Activated CD4-positive, alpha-beta memory T cell treated with anti-CD3 and anti-CD28 coated beads for 36 hours (primary cell): ENCODE measurements at regions of chr5 and their contacts with region 1.

Region 1: GRCh38 chr5:138352071-138352721 is at the start of gene KDM3B:
- DNase-seq: peak; percentile 95
- H3K4me3 Mint-ChIP-seq: peak within 1 kb of the TSS; percentile 91
- H3K27ac Mint-ChIP-seq: peak within 1 kb of the TSS; percentile 91
- H3K4me1 Mint-ChIP-seq: peaks cover 30% of the 10 kb centered on the region
- H3K27me3 Mint-ChIP-seq: no peaks in the 10 kb centered on the region
- total RNA-seq, gene KDM3B: 38.6 to 39.6 TPM

Region 2: GRCh38 chr5:138213161-138214029 is 138.8 kb before region 1 on chr5 and contains the start of gene CDC23:
- CTCF ChIA-PET with region 1: interaction called, 13 read pairs
- POLR2A ChIA-PET with region 1: interaction called, 6 read pairs
- intact Hi-C with region 1: loop called (anchors 1 kb)
- DNase-seq: peak; percentile 94
- H3K4me3 Mint-ChIP-seq: peak within 1 kb of the TSS; percentile 100
- H3K27ac Mint-ChIP-seq: peak within 1 kb of the TSS; percentile 89
- H3K4me1 Mint-ChIP-seq: peaks cover 20% of the 10 kb centered on the region
- H3K27me3 Mint-ChIP-seq: no peaks in the 10 kb centered on the region
- total RNA-seq, gene CDC23: 32.4 to 33.4 TPM

Region 3: GRCh38 chr5:138337685-138338410 is 14.3 kb before region 1 on chr5 and contains the start of gene FAM53C:
- CTCF ChIA-PET with region 1: interaction called, 192 read pairs
- POLR2A ChIA-PET with region 1: interaction called, 105 read pairs
- intact Hi-C with region 1: loop called (anchors 1 kb)
- DNase-seq: peak; percentile 94
- H3K4me3 Mint-ChIP-seq: peak within 1 kb of the TSS; percentile 93
- H3K27ac Mint-ChIP-seq: peak within 1 kb of the TSS; percentile 96
- H3K4me1 Mint-ChIP-seq: peaks cover 38% of the 10 kb centered on the region
- H3K27me3 Mint-ChIP-seq: no peaks in the 10 kb centered on the region
- total RNA-seq, gene FAM53C: 17.2 to 19.2 TPM

Region 4: DNA sequence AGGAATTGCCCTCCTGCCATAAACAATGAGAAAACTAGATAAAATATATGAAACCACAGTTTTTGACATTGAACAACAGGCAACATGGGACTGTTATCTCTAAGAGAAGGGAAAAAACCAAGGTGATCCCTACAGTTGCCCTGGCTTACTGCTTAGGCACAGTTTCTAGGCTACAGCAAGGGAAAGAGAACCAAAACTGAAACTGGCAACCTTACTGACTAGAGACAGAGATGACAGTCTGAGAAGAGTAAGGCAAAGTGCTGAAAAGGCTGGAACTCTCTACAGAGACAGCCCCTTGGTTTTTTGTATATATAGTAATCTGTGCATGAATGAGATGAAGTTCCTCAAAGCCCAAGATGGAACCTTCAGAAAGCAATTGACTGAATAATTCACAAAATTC is 50.4 kb after region 1 on chr5:
- CTCF ChIA-PET with region 1: interaction called, 15 read pairs
- POLR2A ChIA-PET with region 1: no interaction called
- intact Hi-C with region 1: loop called (anchors 5 kb)
- DNase-seq: no peak
- H3K4me3 Mint-ChIP-seq: no peak overlapping the region
- H3K27ac Mint-ChIP-seq: peak overlapping the region; percentile 53
- H3K4me1 Mint-ChIP-seq: peaks cover 16% of the 10 kb centered on the region
- H3K27me3 Mint-ChIP-seq: no peaks in the 10 kb centered on the region

Region 5: DNA sequence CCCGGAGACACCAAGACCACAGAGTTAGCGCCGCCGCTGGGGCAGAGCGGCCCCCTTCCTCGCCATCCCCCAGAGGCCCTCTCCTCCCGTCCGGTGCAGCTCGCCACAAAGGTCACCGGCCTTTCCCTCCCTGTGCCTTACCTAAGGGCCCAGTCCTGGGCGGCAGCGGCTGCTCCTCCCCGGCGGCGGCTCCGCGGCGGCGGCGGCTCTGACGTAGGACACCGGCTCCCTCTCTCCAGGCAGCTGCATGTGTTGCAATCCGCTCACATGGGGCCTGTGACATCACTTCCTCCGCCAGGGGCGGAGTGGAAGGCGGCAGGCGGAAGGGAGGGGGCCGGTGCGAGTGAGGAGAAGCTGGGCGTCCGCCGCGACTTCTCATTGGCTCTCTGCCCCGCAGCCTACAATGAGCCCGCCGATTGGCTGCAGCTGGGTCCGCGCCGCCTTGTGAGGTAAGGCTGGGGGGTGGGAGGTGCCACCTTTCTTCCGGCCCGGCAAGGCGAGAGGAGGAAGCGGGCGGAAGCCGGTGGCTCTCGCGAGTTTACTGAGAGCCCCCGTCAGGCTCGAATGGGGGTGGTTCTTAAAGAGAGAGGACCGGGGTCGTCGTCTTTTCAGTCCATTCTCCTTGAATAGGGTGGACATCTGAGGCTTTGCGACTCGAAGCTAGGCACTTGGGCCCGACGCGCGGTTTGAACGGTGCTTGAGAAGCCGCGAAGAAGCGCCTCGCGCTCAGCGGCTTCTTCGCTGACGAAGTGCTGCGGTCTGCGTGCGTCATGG is 190.9 kb after region 1 on chr5 and contains the start of gene ETF1:
- CTCF ChIA-PET with region 1: interaction called, 8 read pairs
- POLR2A ChIA-PET with region 1: interaction called, 18 read pairs
- intact Hi-C with region 1: loop called (anchors 1 kb)
- DNase-seq: peak; percentile 100
- H3K4me3 Mint-ChIP-seq: peak within 1 kb of the TSS; percentile 98
- H3K27ac Mint-ChIP-seq: peak within 1 kb of the TSS; percentile 100
- H3K4me1 Mint-ChIP-seq: peaks cover 71% of the 10 kb centered on the region
- H3K27me3 Mint-ChIP-seq: no peaks in the 10 kb centered on the region
- total RNA-seq, gene ETF1: 131 to 132 TPM